Activated CD8-positive, alpha-beta memory T cell treated with anti-CD3 and anti-CD28 coated beads, Interleukin-2, amount 10 ng/mL, durations not matched to agents 7 days and 5 days (primary cell): ENCODE measurements at regions of chr22 and their contacts with region 1.

Region 1: DNA sequence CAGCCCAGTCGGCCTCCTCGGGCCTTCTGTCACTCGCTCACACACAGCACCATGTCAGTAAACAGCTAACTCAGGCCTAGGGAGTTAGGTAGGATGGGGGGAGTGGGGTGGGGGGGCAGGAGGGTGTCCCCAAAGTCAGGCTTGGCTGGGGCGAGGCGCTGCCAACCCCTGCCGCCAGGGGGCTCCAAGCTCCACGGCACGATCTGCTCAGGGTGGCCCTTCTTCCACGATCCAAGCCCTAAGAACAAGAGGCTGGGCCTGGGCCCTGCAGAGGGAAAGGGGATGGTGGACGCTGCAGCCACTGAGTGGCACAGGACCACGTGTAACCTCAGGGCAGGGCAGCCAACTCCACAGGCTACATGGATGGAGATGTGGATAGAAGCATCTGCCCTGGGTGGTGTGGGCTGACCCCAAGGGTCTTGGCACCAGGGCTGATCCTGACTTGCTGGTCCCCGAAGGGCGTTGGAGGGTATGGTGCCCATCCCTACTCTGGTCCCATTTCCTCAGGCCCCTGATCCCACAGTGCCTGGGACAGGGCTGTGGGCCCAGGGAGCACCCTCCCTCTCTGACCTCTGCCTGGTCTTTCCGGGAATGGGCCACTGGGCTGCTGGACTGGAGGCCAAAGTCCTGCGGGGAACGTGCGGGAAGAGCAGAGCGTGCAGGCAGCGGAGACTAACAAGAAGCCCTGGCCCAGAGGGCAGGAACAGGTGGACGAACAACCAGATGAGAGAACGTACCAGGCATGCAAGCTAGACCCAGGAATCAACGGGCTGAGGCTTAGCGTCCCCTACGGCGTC is 29.1 kb upstream of the TXNRD2 start:
- DNase-seq: peak; percentile 82
- ATAC-seq: peak; percentile 78
- H3K4me3 Mint-ChIP-seq: no peak overlapping the region
- H3K27ac Mint-ChIP-seq: no peak overlapping the region
- H3K4me1 Mint-ChIP-seq: peaks cover 9% of the 10 kb centered on the region
- H3K27me3 Mint-ChIP-seq: no peaks in the 10 kb centered on the region

Region 2: GRCh38 chr22:19941365-19942082 is 29.2 kb before region 1 on chr22 and contains the starts of genes COMT and TXNRD2:
- CTCF ChIA-PET with region 1: no interaction called
- DNase-seq: peak; percentile 84
- ATAC-seq: peak; percentile 95
- H3K4me3 Mint-ChIP-seq: peak within 1 kb of the TSS; percentile 96
- H3K27ac Mint-ChIP-seq: peak within 1 kb of the TSS; percentile 96
- H3K4me1 Mint-ChIP-seq: peaks cover 22% of the 10 kb centered on the region
- H3K27me3 Mint-ChIP-seq: no peaks in the 10 kb centered on the region
- total RNA-seq, gene COMT: 92.6 to 95.3 TPM
- total RNA-seq, gene TXNRD2: 20.5 to 23.1 TPM

Region 3: DNA sequence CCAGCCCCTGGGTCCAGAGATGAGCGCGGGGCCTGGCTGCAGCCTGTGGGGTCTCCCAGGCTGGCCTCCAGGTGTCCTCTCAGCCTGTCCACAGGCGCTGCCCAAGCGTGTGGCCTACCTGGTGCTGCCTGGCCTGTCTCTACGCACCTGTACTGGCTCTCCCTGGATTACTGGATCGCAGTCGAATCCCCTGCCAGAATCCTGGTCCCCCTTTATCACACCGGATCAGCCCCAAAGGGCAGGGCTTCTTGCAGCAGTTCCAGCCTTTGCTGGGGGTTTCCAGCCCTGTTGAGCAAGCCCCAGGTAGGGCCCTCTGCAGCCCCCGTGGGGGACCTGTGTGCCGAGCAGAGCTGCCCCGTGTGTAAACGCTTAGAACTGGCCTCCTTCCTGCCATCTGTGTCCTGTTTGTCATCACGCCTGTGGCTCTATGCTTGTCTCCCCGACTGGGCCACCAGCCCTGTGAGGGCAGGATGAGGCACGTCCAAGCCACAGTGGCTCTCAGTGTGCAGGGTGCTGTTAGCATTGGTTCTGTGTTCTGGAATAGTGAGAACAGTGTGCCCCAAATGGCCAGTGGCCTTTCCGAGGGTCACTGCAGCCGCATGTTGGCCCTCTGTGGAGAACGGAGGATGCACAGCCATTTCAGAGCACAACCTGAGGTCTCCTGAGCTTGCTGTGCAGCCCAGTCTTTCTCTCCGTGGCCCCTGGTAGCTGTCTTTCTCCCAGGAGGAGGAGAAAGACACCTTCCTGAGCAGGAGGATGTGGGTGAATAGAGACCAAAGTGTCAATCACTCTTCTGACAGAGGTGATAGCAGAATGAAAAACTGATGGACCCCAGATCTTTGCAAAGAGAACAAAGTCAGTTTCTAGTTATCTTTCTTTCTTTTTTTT is 15.2 kb before region 1 on chr22:
- CTCF ChIA-PET with region 1: interaction called, 11 read pairs
- DNase-seq: peak; percentile 77
- ATAC-seq: peak; percentile 80
- H3K4me3 Mint-ChIP-seq: peak overlapping the region; percentile 51
- H3K27ac Mint-ChIP-seq: peak overlapping the region; percentile 96
- H3K4me1 Mint-ChIP-seq: peaks cover 40% of the 10 kb centered on the region
- H3K27me3 Mint-ChIP-seq: no peaks in the 10 kb centered on the region

Region 4: DNA sequence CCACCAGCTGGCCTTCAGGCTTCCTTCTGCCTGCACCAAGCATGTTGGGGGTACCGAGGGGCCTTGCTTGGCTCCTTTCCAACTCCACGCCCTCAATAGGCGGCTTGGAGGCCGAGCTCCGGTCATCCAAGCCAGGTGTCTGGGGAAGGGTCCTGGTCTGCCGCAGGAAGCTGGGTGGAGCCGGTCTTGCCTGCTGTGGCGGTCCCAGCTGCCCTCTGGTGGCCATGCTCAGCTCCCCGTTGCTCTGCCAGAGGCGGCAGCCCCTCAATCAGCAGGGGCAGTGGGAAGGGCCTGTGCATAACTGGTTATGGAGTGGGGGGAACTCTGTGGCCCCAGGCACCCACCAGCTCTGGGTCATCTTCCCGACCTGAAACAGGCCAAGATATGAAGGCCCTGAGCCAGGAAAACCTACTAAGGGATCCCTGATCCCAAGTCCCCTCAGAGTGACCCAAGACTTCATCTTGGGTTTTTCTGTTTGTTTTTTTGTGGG is 42.8 kb after region 1 on chr22:
- CTCF ChIA-PET with region 1: interaction called, 97 read pairs
- DNase-seq: peak; percentile 66
- ATAC-seq: no peak
- H3K4me3 Mint-ChIP-seq: no peak overlapping the region
- H3K27ac Mint-ChIP-seq: no peak overlapping the region
- H3K4me1 Mint-ChIP-seq: peaks cover 14% of the 10 kb centered on the region
- H3K27me3 Mint-ChIP-seq: peaks cover 32% of the 10 kb centered on the region

Region 5: DNA sequence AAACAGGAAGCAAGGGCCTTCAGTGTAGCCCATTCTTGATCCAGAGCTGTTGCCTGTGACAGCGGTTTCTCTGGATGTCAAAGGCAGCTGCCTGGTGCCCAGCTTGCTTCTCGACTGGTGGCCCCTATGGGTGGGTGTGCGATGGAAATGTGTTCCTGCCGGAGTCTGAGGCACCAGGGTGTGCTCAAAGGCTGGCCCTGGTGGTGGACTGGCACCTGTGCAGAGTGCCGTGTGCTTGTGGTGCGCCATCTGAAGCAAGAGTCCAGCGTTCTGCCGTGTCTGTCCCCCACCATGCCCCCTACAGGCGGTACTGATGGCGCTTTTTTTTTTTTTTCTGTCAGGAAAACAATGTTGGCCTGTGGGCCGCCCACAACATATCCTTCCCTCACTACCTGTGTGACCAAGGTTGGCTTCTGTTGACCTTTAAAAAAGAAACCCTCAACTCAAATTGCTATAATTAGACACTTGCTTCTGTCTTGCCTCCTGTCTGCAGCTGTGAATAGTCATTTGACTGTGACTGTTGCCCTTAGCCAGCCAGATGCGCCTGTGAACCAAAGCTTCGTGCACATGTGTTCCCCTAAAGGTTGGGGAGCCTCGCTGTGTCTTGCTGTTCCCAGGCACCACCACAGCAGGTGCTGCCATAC is 140.5 kb after region 1 on chr22:
- CTCF ChIA-PET with region 1: interaction called, 19 read pairs
- DNase-seq: peak; percentile 65
- ATAC-seq: peak; percentile 70
- H3K4me3 Mint-ChIP-seq: no peak overlapping the region
- H3K27ac Mint-ChIP-seq: peak overlapping the region; percentile 82
- H3K4me1 Mint-ChIP-seq: peaks cover 43% of the 10 kb centered on the region
- H3K27me3 Mint-ChIP-seq: no peaks in the 10 kb centered on the region

Region 6: DNA sequence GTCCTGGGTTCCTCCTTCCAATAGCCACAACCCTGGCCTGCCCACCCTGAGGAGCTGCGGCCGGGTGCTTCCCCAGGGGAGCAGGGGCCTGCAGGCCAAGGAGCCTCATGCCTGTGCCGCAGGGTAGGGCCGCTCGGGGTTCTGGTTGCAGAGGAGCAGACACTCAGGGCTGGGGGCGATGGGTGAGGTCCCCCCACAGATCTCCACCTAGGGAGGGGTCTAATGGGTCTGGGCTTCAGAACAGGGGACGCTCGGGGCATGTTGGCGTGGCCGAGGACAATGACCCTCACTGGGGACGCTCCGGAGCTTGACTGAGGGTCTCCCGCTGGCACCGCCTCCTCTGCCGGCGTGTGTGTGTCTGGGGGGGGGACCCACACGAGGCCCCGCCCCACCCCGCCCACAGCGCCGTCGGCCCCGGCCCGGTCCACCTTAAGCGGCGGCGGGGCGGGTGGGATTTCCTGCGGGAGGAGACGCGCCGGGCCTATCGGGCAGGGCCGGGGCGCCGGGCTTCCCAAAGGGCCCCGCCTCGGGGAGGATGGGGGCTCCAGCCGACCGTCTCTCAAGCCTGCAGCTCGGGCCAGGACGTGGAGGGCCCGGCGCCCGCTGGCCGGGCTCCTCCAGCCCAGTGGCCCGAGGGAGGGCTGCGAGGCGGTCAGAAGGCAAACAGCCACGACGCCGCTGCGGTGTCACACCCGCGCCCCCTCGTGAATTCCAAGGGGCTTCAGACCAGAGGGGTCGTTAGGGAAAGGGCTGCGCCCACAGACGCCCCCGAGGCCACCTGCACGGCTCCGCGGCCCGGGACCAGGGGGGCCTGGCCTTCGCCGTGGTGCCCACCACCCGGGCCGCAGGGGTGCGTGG is 160.3 kb after region 1 on chr22:
- CTCF ChIA-PET with region 1: interaction called, 28 read pairs
- DNase-seq: peak; percentile 76
- ATAC-seq: peak; percentile 68
- H3K4me3 Mint-ChIP-seq: no peak overlapping the region
- H3K27ac Mint-ChIP-seq: no peak overlapping the region
- H3K4me1 Mint-ChIP-seq: peaks cover 21% of the 10 kb centered on the region
- H3K27me3 Mint-ChIP-seq: no peaks in the 10 kb centered on the region